Ovary (tissue), 10 donors: ENCODE measurements at regions of chr17 and their contacts with region 1.

Region 1: DNA sequence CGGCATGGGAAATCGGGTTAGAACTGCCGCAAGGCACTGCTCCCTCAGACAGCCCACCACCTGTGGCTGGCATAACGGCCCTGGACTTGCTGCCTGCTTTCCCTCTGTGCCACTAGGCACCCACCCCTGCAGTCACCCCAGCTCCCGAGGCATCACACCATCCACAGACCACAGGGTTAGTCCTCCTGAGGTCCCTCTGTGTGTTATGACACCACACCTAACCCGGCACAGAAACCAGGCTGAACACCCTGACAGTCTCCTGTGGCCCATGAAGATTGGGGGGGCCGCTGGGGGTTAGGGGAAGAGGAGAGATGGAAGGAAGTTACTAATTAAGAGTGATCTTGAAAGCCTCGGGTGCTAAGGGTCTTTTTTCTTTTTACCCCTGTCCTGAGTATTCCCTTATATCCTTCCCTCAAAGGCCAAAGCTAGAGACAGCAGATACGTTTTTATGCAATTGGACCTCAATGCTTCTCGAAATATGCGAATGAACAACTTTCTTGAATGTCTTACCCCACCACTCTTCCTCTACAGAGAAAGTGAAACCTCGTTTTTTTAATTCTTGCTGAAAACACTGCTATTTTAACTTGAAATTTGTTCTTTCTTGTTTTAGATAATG is 7.0 kb downstream of the CYTH1 start:
- DNase-seq: no peak
- H3K4me3 ChIP-seq: no peak overlapping the region
- H3K27ac ChIP-seq: peak overlapping the region in 1 of 2 donors; percentile 21
- H3K4me1 ChIP-seq: peaks cover 3% of the 10 kb centered on the region
- H3K27me3 ChIP-seq: no peaks in the 10 kb centered on the region
- CTCF ChIP-seq: no peak
- EP300 ChIP-seq: no peak
- POLR2A ChIP-seq: no peak

Region 2: DNA sequence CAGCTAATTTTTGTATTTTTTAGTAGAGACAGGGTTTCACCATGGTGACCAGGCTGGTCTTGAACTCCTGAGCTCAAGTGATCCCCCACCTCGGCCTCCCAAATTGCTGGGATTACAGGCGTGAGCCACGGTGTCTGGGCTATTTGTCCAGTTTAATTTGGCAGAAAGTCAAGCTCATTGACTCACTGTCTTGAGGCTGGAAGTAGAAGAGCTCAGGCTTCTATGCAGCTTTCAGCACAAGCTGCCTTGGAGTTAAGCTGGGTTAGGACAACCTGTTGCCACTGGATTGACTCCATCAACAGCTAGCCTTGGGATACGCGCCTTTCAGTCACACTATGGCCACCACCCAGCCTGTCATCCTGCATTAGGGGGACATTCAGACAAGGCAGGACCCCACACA is 121.7 kb before region 1 on chr17:
- intact Hi-C with region 1: no loop called
- DNase-seq: no peak
- H3K4me3 ChIP-seq: no peak overlapping the region
- H3K27ac ChIP-seq: no peak overlapping the region
- H3K4me1 ChIP-seq: no peaks in the 10 kb centered on the region
- H3K27me3 ChIP-seq: no peaks in the 10 kb centered on the region
- CTCF ChIP-seq: no peak
- EP300 ChIP-seq: no peak
- POLR2A ChIP-seq: no peak

Region 3: DNA sequence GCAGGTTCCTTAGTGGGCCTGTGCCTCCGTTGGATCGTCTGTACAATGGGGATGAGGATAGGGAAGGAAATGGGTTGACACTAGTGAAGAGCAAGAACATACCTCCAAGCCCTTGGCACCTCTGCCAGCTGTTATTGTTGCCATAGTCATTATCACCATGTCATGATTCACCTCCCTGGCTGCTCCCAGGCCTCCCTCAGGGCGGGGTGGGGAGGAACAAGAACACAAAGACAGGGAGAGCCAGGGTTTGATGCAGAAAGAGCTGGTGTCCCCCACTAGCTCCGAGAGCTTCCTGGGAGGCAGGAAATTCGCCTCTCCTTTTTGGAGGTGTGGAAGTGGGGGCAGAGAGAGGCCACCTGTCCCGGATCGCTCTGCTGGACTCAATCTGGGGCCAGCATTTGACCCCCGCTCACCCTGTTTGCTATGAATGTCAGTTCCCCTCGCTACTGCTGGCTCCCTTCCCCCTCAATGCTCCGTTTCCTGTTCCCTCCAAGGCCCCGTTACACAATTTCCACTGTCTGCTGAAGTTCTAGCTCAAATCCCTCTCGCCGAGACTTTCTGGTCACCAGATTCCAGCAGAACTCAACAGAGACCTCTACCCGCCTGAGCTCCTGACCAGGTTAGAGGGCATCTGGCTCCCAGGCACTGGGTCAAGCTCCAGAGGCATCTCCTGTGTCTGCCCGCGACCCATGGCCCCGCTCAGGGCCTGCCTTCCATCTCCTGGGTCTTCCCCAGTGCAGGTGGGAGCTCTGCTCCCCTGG is 141.0 kb after region 1 on chr17:
- intact Hi-C with region 1: no loop called
- DNase-seq: peak in 2 of 5 donors; percentile 37 to 58
- H3K4me3 ChIP-seq: peak overlapping the region; percentile 13
- H3K27ac ChIP-seq: peak overlapping the region; percentile 43 to 78
- H3K4me1 ChIP-seq: peaks cover 42% of the 10 kb centered on the region
- H3K27me3 ChIP-seq: no peaks in the 10 kb centered on the region
- CTCF ChIP-seq: no peak
- EP300 ChIP-seq: no peak
- POLR2A ChIP-seq: no peak

Region 4: DNA sequence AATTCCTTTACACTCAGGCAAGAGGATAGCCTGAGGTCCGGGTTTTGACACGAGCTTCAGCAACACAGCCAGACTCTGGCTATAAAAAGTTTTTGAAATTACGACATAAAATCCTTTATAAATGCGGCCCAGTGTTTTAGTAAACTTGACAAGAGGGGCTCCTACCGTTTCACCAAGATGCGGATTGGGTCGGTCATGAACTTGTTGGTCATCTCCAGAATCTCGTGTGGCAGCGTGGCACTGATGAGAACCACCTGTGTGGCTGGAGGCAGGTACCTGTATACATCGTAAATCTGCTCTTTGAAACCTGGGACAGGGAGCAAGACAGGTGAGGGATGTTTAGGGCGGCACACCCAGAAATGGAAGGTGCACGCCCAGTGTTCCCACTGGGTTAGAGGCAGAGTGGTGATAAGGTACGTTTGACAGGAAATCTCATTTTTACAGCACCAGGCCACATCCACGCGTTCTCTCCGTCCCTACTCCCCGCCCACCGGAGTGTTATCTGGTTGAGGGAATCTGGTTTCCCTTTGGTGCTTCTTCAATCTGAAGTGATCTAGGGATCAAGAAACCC is 1363.9 kb after region 1 on chr17:
- intact Hi-C with region 1: loop called in 1 of 4 experiments (anchors 5 kb)
- DNase-seq: no peak
- H3K4me3 ChIP-seq: no peak overlapping the region
- H3K27ac ChIP-seq: no peak overlapping the region
- H3K4me1 ChIP-seq: no peaks in the 10 kb centered on the region
- H3K27me3 ChIP-seq: no peaks in the 10 kb centered on the region
- CTCF ChIP-seq: no peak
- EP300 ChIP-seq: no peak
- POLR2A ChIP-seq: no peak